OCI-LY7 (cell line): ENCODE measurements at regions of chr21 and their contacts with region 1.

Region 1: GRCh38 chr21:14686466-14687267 is 140.6 kb upstream of the SAMSN1 start:
- DNase-seq: peak; percentile 42
- H3K4me3 ChIP-seq: peak overlapping the region; percentile 41
- H3K27ac ChIP-seq: peak overlapping the region; percentile 71
- H3K4me1 ChIP-seq: peaks cover 83% of the 10 kb centered on the region
- CTCF ChIP-seq: no peak

Region 2: GRCh38 chr21:14545906-14546480 is 140.7 kb before region 1 on chr21 and contains the start of gene SAMSN1:
- CTCF ChIA-PET with region 1: no interaction called
- POLR2A ChIA-PET with region 1: no interaction called
- intact Hi-C with region 1: loop called (anchors 5 kb)
- DNase-seq: no peak
- H3K4me3 ChIP-seq: no peak within 1 kb of the TSS
- H3K27ac ChIP-seq: no peak within 1 kb of the TSS
- H3K4me1 ChIP-seq: no peaks in the 10 kb centered on the region
- CTCF ChIP-seq: no peak
- total RNA-seq, gene SAMSN1: not detected in 2 replicates

Region 3: GRCh38 chr21:14675774-14676530 is 10.7 kb before region 1 on chr21:
- CTCF ChIA-PET with region 1: interaction called, 8 read pairs
- POLR2A ChIA-PET with region 1: interaction called, 81 read pairs
- intact Hi-C with region 1: loop called (anchors 1 kb)
- DNase-seq: peak; percentile 90
- H3K4me3 ChIP-seq: peak overlapping the region; percentile 60
- H3K27ac ChIP-seq: peak overlapping the region; percentile 99
- H3K4me1 ChIP-seq: peaks cover 62% of the 10 kb centered on the region
- CTCF ChIP-seq: no peak

Region 4: DNA sequence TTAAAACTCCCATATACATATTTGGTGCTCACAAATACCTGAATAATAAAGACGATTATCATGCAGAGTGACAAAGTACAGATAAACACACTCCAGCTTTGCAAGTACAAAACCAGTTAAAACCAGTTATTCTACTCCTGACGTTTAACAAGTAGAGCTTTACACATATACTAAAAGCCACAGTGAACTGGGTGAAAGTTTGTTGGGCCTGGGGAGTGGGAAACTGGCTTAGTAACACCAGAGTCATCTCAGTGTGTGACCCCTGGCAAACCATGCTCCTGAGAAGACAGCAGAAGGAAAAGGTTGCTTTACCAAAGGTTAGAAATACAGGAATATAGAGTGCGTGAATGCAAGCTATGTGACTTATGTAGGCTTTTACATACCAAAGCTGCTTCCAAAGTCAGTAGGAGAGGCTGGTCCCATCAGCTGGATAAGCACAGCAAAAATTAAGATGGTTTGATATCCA is 230.0 kb after region 1 on chr21:
- CTCF ChIA-PET with region 1: no interaction called
- POLR2A ChIA-PET with region 1: no interaction called
- intact Hi-C with region 1: no loop called
- DNase-seq: no peak
- H3K4me3 ChIP-seq: no peak overlapping the region
- H3K27ac ChIP-seq: no peak overlapping the region
- H3K4me1 ChIP-seq: no peaks in the 10 kb centered on the region
- CTCF ChIP-seq: no peak

Region 5: GRCh38 chr21:15037095-15037899 is 350.6 kb after region 1 on chr21:
- CTCF ChIA-PET with region 1: no interaction called
- POLR2A ChIA-PET with region 1: no interaction called
- intact Hi-C with region 1: no loop called
- DNase-seq: no peak
- H3K4me3 ChIP-seq: no peak overlapping the region
- H3K27ac ChIP-seq: no peak overlapping the region
- H3K4me1 ChIP-seq: no peaks in the 10 kb centered on the region
- CTCF ChIP-seq: no peak

Region 6: DNA sequence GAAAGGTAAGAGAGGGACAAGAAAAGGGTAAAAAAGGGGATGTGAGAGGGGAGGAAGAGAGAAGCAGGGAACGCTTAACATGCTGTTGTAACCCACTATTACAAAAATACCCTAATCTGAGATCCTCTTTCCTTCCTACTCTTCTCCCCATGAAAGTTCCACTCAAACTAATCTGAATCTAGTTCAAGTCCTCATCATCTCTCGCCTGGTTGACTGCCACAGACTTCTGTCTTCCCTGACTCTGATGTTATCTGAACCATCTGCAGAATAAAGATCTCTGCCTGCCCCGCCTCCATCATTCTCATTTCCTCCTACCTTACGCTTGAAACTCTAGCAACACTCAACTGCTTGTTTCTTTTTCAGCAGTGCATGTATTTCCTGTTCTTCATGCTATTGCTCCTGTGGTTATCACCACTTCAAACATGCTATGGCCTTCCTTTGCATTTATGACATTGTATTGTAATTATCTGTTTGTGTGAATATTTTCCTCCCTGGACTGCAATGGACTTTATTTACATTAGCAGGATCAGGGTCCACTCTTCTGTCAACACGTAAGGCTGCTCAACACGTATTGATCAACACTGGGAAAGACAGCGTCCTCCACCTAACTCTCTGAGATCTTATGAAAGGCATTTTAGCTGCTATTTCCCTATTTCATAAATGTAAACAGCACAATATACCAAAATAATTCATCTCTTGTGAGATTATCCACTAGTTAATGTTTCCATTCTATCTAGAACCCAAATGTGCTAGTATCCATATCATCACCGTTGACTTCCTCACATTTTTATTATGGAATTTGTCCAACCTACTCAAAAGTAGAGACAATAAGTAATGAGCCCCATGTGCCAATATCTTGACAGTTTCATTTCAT is 827.6 kb after region 1 on chr21:
- CTCF ChIA-PET with region 1: no interaction called
- POLR2A ChIA-PET with region 1: no interaction called
- intact Hi-C with region 1: loop called (anchors 10 kb)
- DNase-seq: peak; percentile 84
- H3K4me3 ChIP-seq: peak overlapping the region; percentile 43
- H3K27ac ChIP-seq: peak overlapping the region; percentile 86
- H3K4me1 ChIP-seq: peaks cover 27% of the 10 kb centered on the region
- CTCF ChIP-seq: no peak

Region 7: GRCh38 chr21:15729674-15730483 is 1043.2 kb after region 1 on chr21 and contains the start of gene USP25:
- CTCF ChIA-PET with region 1: no interaction called
- POLR2A ChIA-PET with region 1: no interaction called
- intact Hi-C with region 1: loop called (anchors 5 kb)
- DNase-seq: peak; percentile 79
- H3K4me3 ChIP-seq: peak within 1 kb of the TSS; percentile 86
- H3K27ac ChIP-seq: peak within 1 kb of the TSS; percentile 49
- H3K4me1 ChIP-seq: peaks cover 14% of the 10 kb centered on the region
- CTCF ChIP-seq: no peak
- total RNA-seq, gene USP25: 25.1 and 27.6 TPM in 2 replicates